AG04450 (cell line): ENCODE measurements at regions of chrX and their contacts with region 1.

Region 1: DNA sequence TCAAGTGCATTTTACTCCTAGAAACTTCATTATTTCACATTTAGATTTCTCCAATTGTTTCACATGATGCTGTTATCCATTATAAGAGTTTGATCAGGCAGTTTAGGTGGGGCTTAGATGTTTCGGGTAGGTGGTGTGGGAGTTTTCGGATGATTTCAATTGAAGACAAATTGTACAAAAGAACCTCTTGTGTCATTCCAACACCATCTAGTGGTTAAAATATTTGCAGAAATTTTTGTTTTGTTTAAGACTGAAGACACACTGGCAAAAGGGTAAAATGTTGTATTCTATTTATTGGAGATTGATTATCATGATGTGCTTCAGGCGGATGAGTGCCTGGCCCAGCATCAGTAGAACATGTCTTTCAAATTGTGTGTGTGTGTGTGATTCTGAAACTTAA is 212.7 kb downstream of the SH3BGRL start:
- DNase-seq: no peak
- H3K4me3 ChIP-seq: no peak overlapping the region
- H3K27ac ChIP-seq: no peak overlapping the region
- H3K27me3 ChIP-seq: no peaks in the 10 kb centered on the region
- CTCF ChIP-seq: peak; percentile 34

Region 2: GRCh38 chrX:80578517-80579105 is 836.0 kb before region 1 on chrX:
- CTCF ChIA-PET with region 1: no interaction called
- POLR2A ChIA-PET with region 1: no interaction called
- DNase-seq: no peak
- H3K4me3 ChIP-seq: no peak overlapping the region
- H3K27ac ChIP-seq: no peak overlapping the region
- H3K27me3 ChIP-seq: no peaks in the 10 kb centered on the region
- CTCF ChIP-seq: peak; percentile 39

Region 3: GRCh38 chrX:81174286-81174685 is 240.3 kb before region 1 on chrX:
- CTCF ChIA-PET with region 1: interaction called, 12 read pairs
- POLR2A ChIA-PET with region 1: no interaction called
- DNase-seq: no peak
- H3K4me3 ChIP-seq: no peak overlapping the region
- H3K27ac ChIP-seq: no peak overlapping the region
- H3K27me3 ChIP-seq: no peaks in the 10 kb centered on the region
- CTCF ChIP-seq: peak; percentile 15; the same call in 1 of the 2 replicates